Activated T-helper 2 cell treated with anti-CD3 and anti-CD28 coated beads, Interferon-gamma antibody, Interleukin-2, Interleukin-4, amounts not matched to agents 10 μg/mL and 5 μg/mL and 100 μg/mL, durations not matched to agents 14 hours and 24 hours and 36 hours (primary cell): ENCODE measurements at regions of chr4 and their contacts with region 1.

Region 1: GRCh38 chr4:41882625-41883347 is 52.4 kb upstream of the TMEM33 start:
- DNase-seq: no peak
- H3K4me3 Mint-ChIP-seq: no peak overlapping the region
- H3K27ac Mint-ChIP-seq: no peak overlapping the region
- H3K4me1 Mint-ChIP-seq: peaks cover 11% of the 10 kb centered on the region
- H3K27me3 Mint-ChIP-seq: peaks cover 68% of the 10 kb centered on the region

Region 2: GRCh38 chr4:41692717-41693345 is 190.0 kb before region 1 on chr4:
- intact Hi-C with region 1: loop called (anchors 1 kb)
- DNase-seq: peak; percentile 11
- H3K4me3 Mint-ChIP-seq: no peak overlapping the region
- H3K27ac Mint-ChIP-seq: no peak overlapping the region
- H3K4me1 Mint-ChIP-seq: peaks cover 3% of the 10 kb centered on the region
- H3K27me3 Mint-ChIP-seq: peaks cover 6% of the 10 kb centered on the region

Region 3: GRCh38 chr4:41751449-41752061 is 131.2 kb before region 1 on chr4:
- intact Hi-C with region 1: loop called (anchors 1 kb)
- DNase-seq: no peak
- H3K4me3 Mint-ChIP-seq: no peak overlapping the region
- H3K27ac Mint-ChIP-seq: no peak overlapping the region
- H3K4me1 Mint-ChIP-seq: peaks cover 1% of the 10 kb centered on the region
- H3K27me3 Mint-ChIP-seq: peaks cover 80% of the 10 kb centered on the region

Region 4: DNA sequence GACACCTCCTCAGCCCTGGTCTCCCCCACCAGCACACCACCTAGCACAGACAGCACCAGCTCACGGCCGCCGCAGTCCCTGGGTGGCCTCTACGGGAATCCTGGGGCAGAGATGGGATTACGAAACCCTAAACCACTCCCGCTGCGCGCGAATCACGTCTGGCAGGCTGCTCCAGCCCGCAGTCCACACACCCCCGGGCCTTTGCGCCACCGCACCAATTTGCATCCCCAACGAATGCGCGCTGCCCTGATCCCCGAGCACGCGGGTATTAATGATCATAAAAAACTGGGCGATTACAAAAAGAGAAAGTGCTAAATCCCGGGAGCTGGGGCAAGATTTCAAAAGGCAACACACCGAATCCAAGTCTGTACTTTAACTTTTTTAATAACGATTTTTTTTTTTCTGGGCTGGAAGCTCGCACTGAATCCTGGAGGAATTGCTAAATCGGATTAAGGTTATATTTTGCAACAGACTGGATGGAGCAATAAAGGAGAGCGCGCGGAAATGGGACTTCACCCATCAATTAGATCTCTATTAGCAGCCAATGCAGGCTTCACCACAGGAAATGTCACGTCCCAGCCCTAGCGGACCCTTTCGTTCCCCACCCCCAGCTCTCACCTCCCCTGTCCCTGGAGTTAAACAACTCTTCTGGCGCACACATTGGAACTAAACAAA is 17.3 kb before region 1 on chr4:
- intact Hi-C with region 1: loop called (anchors 2 kb)
- DNase-seq: no peak
- H3K4me3 Mint-ChIP-seq: no peak overlapping the region
- H3K27ac Mint-ChIP-seq: no peak overlapping the region
- H3K4me1 Mint-ChIP-seq: peaks cover 10% of the 10 kb centered on the region
- H3K27me3 Mint-ChIP-seq: peaks cover 71% of the 10 kb centered on the region

Region 5: GRCh38 chr4:42151568-42152506 is 269.1 kb after region 1 on chr4:
- intact Hi-C with region 1: loop called (anchors 5 kb)
- DNase-seq: no peak
- H3K4me3 Mint-ChIP-seq: peak overlapping the region; percentile 49
- H3K27ac Mint-ChIP-seq: no peak overlapping the region
- H3K4me1 Mint-ChIP-seq: peaks cover 6% of the 10 kb centered on the region
- H3K27me3 Mint-ChIP-seq: peaks cover 56% of the 10 kb centered on the region

Region 6: DNA sequence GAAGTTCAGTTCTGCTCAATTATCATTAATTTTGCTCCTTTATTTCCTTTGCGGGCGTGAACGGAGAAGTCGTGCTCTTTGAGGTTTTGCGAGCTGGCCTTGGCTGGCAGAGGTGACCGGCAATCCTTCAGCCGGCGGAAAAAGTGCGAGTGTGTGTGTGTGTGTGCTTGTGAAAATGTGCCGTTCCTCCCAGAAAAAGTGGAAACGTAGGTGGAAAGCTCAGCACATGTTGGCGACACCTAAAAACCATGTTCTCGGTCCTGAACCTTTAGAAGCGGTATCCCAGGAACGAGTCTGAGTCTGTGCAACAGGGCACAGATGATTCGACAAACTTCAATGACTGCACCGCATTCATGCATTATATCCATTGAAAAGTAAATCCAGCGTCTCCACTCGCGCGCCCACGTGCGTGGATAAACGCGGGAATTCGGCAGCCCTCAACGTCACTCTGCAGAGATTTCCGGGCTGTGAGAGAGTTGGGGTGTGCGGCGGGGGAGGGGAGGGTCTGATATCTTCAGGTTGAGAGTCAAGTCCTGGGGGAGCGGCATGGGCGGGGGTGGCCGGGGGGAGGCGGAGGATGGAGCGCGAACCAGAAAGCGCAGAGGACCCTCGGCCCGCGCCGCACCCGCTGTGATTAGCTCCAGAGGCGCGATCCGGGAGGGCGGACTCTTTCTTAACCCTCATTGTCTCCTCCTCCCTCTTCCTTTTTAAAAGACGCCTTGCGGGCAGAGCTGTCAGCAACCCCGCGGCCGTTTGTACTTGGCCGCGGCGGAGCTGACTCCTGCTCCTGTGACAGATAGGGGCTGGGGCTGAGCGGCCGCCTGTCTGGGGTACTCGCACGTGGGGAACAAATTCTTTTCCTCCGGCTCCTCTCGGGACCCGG is 514.2 kb after region 1 on chr4 and contains the start of gene SHISA3:
- intact Hi-C with region 1: loop called (anchors 5 kb)
- DNase-seq: peak; percentile 20
- H3K4me3 Mint-ChIP-seq: peak within 1 kb of the TSS; percentile 79
- H3K27ac Mint-ChIP-seq: no peak within 1 kb of the TSS
- H3K4me1 Mint-ChIP-seq: peaks cover 15% of the 10 kb centered on the region
- H3K27me3 Mint-ChIP-seq: peaks cover 65% of the 10 kb centered on the region
- total RNA-seq, gene SHISA3: 0.80 and 1.2 TPM in 2 replicates